ENCODE measurements at regions of chr20 and their contacts with region 1.

Region 1: GRCh38 chr20:16573001-16573965 is at the start of gene KIF16B:
- DNase-seq: peak; percentile 75 to 86
- ATAC-seq: peak; percentile 84 to 88 (median 88)
- H3K4me3 ChIP-seq: peak within 1 kb of the TSS; percentile 50
- H3K4me3 Mint-ChIP-seq: peak within 1 kb of the TSS; percentile 85
- H3K27ac ChIP-seq: no peak within 1 kb of the TSS
- H3K27ac Mint-ChIP-seq: peak within 1 kb of the TSS; percentile 24 to 80
- H3K4me1 ChIP-seq: peaks cover 28% of the 10 kb centered on the region
- H3K4me1 Mint-ChIP-seq: peaks cover 15 to 46% of the 10 kb centered on the region in 2 donors
- H3K27me3 ChIP-seq: no peaks in the 10 kb centered on the region
- H3K27me3 Mint-ChIP-seq: peaks cover 0 to 12% of the 10 kb centered on the region in 2 donors
- CTCF ChIP-seq: no peak
- total RNA-seq, gene KIF16B: 3.9 to 11.8 (median 9.2) TPM

Region 2: DNA sequence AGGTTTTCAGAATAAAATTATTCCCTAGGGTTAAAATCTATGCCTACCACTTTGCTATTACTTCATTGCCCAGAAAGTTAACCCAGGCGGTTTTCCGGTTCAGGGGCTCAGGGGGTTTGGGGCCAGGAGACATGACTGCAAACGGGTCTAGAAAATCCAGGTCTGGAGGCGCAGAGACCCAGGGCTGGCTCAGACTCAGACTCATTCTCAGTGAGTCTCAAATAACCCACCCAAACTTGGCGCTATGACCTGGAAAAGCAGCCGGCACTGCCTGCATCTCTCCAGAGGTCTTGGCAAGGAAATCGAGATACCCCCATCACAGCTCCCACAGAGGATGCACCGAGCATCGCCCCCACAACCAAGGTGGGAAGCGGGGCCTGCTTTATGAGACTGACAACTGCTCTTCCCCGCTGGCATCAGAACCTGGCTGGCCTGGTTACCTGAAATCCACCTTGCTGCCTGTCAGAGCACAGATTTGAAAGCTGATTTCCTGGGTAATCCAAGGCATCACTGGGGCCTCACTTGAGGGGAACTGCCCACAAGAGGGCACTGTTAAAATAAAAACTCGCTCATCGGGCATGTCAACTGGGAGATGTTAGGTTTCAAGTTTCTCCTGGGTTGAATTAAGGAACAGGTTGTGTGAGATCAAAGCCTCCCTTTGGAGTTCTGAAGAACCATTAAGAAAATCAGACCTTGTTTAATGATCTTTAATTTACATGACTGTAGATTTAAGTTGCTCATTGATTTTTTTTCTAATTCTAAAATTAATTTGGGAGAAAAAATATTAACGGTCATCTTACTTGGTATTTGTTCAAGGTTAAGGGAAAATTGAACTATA is 55.1 kb before region 1 on chr20:
- intact Hi-C with region 1: no loop called
- DNase-seq: peak in 1 of 2 donors; percentile 35
- ATAC-seq: no peak
- H3K4me3 ChIP-seq: no peak overlapping the region
- H3K4me3 Mint-ChIP-seq: no peak overlapping the region
- H3K27ac ChIP-seq: no peak overlapping the region
- H3K27ac Mint-ChIP-seq: no peak overlapping the region
- H3K4me1 ChIP-seq: no peaks in the 10 kb centered on the region
- H3K4me1 Mint-ChIP-seq: peaks cover 0 to 9% of the 10 kb centered on the region in 2 donors
- H3K27me3 ChIP-seq: no peaks in the 10 kb centered on the region
- H3K27me3 Mint-ChIP-seq: no peaks in the 10 kb centered on the region
- CTCF ChIP-seq: peak; percentile 16

Region 3: DNA sequence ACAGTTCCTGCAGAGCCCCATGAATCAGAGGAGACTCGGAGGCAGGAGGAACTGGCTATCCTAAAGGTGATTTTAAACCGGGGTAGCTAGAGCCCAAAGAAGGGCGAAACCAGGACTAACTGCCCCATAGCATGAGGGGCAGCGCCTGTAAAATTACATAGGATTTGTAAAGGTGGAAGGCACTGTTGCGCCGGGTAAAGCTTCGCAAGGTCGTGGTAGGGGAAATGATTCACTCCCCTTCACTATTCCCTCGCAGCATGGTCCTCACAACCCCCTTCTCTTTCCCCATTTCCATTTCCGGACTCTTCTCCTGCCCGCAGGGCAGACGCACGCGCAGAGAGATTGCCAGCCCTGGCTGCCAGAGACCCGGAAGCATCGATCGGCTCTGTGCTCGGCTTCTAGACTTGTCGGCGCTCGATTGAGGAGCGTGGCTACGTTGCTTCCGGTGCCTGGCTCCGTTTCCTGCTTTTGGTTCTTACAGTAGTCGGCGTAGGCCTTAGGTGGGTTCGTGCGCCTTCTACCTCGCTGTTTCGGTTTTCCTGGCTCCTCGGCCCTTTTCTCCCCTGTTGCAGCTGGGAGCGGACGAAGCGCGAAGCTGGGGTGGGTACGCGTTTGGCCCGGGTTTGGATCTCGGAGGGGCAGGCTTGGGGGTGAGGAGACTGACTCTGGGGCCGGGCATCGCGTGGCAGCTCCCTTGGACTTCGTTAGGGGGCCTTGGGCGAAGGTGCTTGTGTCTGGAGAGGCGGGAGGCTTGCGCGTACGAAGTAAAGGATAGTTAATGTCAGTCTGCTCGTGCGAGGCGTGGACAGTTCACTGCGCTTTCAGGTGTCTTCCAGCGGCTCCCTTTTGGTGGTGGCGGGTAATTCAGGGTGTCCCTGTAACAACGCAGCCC is 156.5 kb after region 1 on chr20 and contains the start of gene SNRPB2:
- intact Hi-C with region 1: loop called (anchors 5 kb)
- DNase-seq: peak; percentile 86 to 96
- ATAC-seq: peak; percentile 97 to 99 (median 97)
- H3K4me3 ChIP-seq: peak within 1 kb of the TSS; percentile 89
- H3K4me3 Mint-ChIP-seq: peak within 1 kb of the TSS; percentile 99
- H3K27ac ChIP-seq: peak within 1 kb of the TSS; percentile 85
- H3K27ac Mint-ChIP-seq: peak within 1 kb of the TSS; percentile 96 to 98
- H3K4me1 ChIP-seq: peaks cover 14% of the 10 kb centered on the region
- H3K4me1 Mint-ChIP-seq: peaks cover 54 to 55% of the 10 kb centered on the region in 2 donors
- H3K27me3 ChIP-seq: peaks cover 7% of the 10 kb centered on the region
- H3K27me3 Mint-ChIP-seq: peaks cover 20 to 31% of the 10 kb centered on the region in 2 donors
- CTCF ChIP-seq: no peak
- total RNA-seq, gene SNRPB2: 39.4 to 43.0 (median 40.5) TPM

Measured in natural killer cell (primary cell).